HEK293T (cell line): ENCODE measurements at regions of chr19 and their contacts with region 1.

Region 1: GRCh38 chr19:48274173-48274572 is 4.3 kb downstream of the ZNF114 start:
- DNase-seq: no peak

Region 2: DNA sequence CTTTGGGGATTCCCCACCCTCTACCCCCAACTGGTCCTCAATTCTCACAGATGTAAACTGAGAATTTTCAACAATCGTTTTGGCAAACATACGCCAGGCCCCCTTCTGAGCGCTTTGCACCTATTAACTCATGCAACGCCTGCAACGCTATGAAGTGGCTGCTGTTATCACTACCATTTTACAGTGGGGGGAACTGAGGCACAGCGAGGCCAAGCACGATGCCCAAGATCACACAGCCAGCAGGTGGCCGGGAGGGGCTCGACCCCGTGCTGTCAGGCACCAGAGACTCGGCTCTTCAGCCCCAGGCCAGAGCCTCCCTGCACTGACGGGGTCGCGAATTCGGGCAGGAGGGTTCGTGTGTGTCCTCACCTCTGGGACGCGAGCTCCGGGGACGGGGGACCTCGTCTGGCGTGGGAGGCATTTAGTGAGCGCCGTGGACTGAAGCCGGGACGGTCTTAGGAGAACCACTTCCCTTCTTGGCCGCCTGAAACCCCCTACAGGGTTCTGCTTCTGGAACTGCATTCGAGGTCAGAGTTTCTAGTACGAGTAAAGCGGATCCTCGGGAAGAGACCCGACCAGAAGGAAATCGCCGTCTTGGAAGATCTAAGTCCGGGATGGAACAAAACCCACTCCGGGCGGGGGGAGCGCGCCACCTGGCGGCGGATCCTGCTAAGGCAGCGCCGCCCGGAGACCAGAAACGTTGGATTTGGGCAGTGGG is 16.8 kb after region 1 on chr19:
- CTCF ChIA-PET with region 1: interaction called, 10 read pairs
- POLR2A ChIA-PET with region 1: interaction called, 4 read pairs
- DNase-seq: peak; percentile 85